Activated CD4-positive, alpha-beta memory T cell treated with anti-CD3 and anti-CD28 coated beads for 36 hours (primary cell): ENCODE measurements at regions of chr14 and their contacts with region 1.

Region 1: DNA sequence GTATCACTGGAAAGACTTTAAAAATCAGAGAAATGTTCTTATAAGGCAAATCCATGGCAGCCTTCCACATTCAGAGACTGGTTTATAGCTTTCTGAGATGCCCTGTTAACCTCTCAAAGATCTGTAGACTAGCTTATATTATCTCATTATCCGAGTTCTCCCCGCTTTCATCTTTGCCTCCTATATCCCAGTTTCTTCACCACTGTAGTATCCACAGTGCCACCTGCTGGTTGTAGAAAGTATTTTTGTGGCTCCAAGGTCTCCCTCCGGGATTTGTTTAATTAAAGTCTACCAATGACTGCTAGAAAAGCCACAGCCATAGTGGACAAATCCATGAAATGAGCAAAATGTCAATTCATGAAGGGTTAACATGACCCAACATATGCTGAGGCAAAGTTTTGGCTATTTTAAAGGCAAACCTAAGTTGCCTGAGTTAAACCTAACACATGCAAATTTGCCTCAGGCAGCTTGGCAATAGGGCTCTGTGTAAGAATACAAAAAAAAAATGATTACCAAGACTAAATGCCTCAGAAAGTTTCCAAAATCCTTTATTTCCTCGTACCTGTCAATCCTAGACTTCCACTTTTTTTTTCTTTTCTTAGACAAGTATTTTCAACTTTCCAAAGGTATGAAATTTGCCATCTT is 218.8 kb upstream of the BMP4 start:
- DNase-seq: peak; percentile 50
- H3K4me3 Mint-ChIP-seq: no peak overlapping the region
- H3K27ac Mint-ChIP-seq: no peak overlapping the region
- H3K4me1 Mint-ChIP-seq: peaks cover 8% of the 10 kb centered on the region
- H3K27me3 Mint-ChIP-seq: peaks cover 26% of the 10 kb centered on the region

Region 2: GRCh38 chr14:53539489-53540126 is 635.8 kb before region 1 on chr14:
- CTCF ChIA-PET with region 1: interaction called, 3 read pairs
- POLR2A ChIA-PET with region 1: no interaction called
- intact Hi-C with region 1: loop called (anchors 2 kb)
- DNase-seq: peak; percentile 67
- H3K4me3 Mint-ChIP-seq: no peak overlapping the region
- H3K27ac Mint-ChIP-seq: no peak overlapping the region
- H3K4me1 Mint-ChIP-seq: no peaks in the 10 kb centered on the region
- H3K27me3 Mint-ChIP-seq: no peaks in the 10 kb centered on the region

Region 3: DNA sequence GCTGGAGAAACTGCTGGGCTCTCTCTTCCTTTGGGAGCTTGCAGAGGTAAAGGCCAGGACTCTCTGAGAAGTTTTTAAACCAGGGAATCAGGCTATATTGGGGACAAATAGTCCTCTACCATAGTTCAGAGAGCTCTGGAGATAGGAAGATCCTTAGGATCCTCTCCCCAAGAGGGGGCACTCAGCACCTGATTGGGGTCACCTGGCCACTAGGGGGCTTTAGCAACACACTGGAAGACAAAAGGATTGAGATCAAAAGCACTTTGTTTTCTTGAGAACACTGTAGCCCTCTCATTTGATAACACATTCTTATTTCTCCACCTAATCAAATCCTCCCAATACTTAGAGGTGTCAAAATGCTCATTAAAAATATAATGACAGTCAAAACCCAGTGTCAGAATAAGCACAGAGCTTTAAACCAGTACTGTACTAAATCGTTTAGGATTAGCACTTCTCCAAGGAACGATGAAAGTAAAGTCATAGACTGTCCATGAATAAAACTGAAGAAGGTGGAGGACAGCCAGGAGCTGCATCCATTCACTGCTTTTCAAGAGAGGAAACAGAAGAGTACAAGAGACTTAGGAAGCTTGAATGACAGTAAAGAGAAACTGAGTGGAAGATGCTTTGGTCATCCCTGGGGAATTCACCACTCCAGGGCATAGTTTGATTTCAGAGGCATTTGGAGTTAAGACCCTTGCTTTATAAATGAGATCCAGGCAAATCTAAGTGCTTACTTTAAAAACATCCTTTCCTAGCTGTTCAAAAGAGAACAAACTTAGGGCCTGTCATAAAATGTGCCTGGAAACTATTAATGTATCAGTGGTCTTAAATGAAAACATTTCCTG is 245.3 kb before region 1 on chr14:
- CTCF ChIA-PET with region 1: interaction called, 21 read pairs
- POLR2A ChIA-PET with region 1: no interaction called
- intact Hi-C with region 1: loop called (anchors 1 kb)
- DNase-seq: peak; percentile 48
- H3K4me3 Mint-ChIP-seq: no peak overlapping the region
- H3K27ac Mint-ChIP-seq: no peak overlapping the region
- H3K4me1 Mint-ChIP-seq: no peaks in the 10 kb centered on the region
- H3K27me3 Mint-ChIP-seq: peaks cover 2% of the 10 kb centered on the region

Region 4: GRCh38 chr14:53953002-53953827 is 222.2 kb before region 1 on chr14:
- CTCF ChIA-PET with region 1: interaction called, 3 read pairs
- POLR2A ChIA-PET with region 1: no interaction called
- intact Hi-C with region 1: loop called (anchors 10 kb)
- DNase-seq: peak; percentile 52
- H3K4me3 Mint-ChIP-seq: peak overlapping the region; percentile 73
- H3K27ac Mint-ChIP-seq: no peak overlapping the region
- H3K4me1 Mint-ChIP-seq: peaks cover 30% of the 10 kb centered on the region
- H3K27me3 Mint-ChIP-seq: peaks cover 53% of the 10 kb centered on the region

Region 5: DNA sequence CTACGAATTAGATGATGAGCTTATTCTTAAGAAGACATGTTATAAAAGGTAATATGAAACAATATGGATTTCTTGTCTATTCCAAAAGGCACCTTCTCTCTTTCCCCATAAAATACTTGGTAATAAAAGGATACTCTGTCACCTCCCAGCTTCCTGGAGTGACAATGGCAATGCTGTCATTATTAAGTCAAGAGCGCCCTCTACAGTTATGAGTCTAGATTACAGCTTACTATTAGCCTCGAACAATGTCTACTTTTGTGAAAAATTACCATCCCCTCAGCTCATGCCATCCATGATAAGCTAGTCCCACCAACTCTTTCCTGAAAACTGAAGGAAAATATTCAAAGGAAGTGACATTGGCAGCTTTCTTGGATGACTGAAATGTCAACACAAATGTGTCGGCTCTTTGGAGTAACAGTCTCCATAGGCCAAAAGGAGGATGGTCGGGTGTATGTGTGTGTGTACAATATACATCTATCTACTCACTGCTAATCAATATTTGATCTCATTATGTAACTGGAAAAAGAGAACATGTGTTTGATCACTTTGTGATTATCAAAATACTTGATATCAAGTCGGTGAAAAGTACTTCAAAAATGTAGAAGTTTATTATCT is 172.7 kb after region 1 on chr14:
- CTCF ChIA-PET with region 1: interaction called, 10 read pairs
- POLR2A ChIA-PET with region 1: no interaction called
- intact Hi-C with region 1: loop called (anchors 10 kb)
- DNase-seq: no peak
- H3K4me3 Mint-ChIP-seq: no peak overlapping the region
- H3K27ac Mint-ChIP-seq: no peak overlapping the region
- H3K4me1 Mint-ChIP-seq: no peaks in the 10 kb centered on the region
- H3K27me3 Mint-ChIP-seq: peaks cover 6% of the 10 kb centered on the region